PC-9 (cell line): ENCODE measurements at regions of chr7 and their contacts with region 1.

Region 1: GRCh38 chr7:134316539-134317344 is at the start of gene SLC35B4:
- DNase-seq: peak; percentile 96
- H3K4me3 ChIP-seq: peak within 1 kb of the TSS; percentile 78
- H3K27ac ChIP-seq: no peak within 1 kb of the TSS
- H3K4me1 ChIP-seq: peaks cover 14% of the 10 kb centered on the region
- H3K27me3 ChIP-seq: no peaks in the 10 kb centered on the region
- CTCF ChIP-seq: no peak; the same call in 1 of the 2 replicates
- total RNA-seq, gene SLC35B4: 16.7 and 17.9 TPM in 2 replicates

Region 2: GRCh38 chr7:133081599-133082389 is 1234.9 kb before region 1 on chr7 and contains the start of gene CHCHD3:
- CTCF ChIA-PET with region 1: no interaction called
- POLR2A ChIA-PET with region 1: no interaction called
- intact Hi-C with region 1: loop called (anchors 2 kb)
- DNase-seq: peak; percentile 98
- H3K4me3 ChIP-seq: peak within 1 kb of the TSS; percentile 88
- H3K27ac ChIP-seq: 0 out of 2 replicates have a peak within 1 kb of the TSS, but pooled peaks have one; percentile 10
- H3K4me1 ChIP-seq: peaks cover 9% of the 10 kb centered on the region; the same call in 1 of the 2 replicates
- H3K27me3 ChIP-seq: peaks cover 14% of the 10 kb centered on the region; the same call in 1 of the 2 replicates
- CTCF ChIP-seq: no peak
- total RNA-seq, gene CHCHD3: 77.7 and 100 TPM in 2 replicates

Region 3: GRCh38 chr7:133252858-133253518 is 1063.8 kb before region 1 on chr7 and contains the start of gene EXOC4:
- CTCF ChIA-PET with region 1: no interaction called
- POLR2A ChIA-PET with region 1: no interaction called
- intact Hi-C with region 1: loop called (anchors 2 kb)
- DNase-seq: peak; percentile 94 to 96
- H3K4me3 ChIP-seq: peak within 1 kb of the TSS; percentile 86
- H3K27ac ChIP-seq: peak within 1 kb of the TSS; percentile 27
- H3K4me1 ChIP-seq: peaks cover 12% of the 10 kb centered on the region
- H3K27me3 ChIP-seq: no peaks in the 10 kb centered on the region
- CTCF ChIP-seq: no peak
- total RNA-seq, gene EXOC4: 88.5 and 101 TPM in 2 replicates

Region 4: GRCh38 chr7:134140889-134141867 is 175.6 kb before region 1 on chr7:
- CTCF ChIA-PET with region 1: no interaction called
- POLR2A ChIA-PET with region 1: no interaction called
- intact Hi-C with region 1: loop called (anchors 10 kb)
- DNase-seq: peak; percentile 45 to 63
- H3K4me3 ChIP-seq: no peak overlapping the region
- H3K27ac ChIP-seq: no peak overlapping the region
- H3K4me1 ChIP-seq: no peaks in the 10 kb centered on the region
- H3K27me3 ChIP-seq: no peaks in the 10 kb centered on the region
- CTCF ChIP-seq: peak; percentile 94

Region 5: GRCh38 chr7:134368851-134369552 is 52.3 kb after region 1 on chr7:
- CTCF ChIA-PET with region 1: no interaction called
- POLR2A ChIA-PET with region 1: no interaction called
- intact Hi-C with region 1: loop called (anchors 2 kb)
- DNase-seq: peak in 1 of 2 experiments; percentile 80
- H3K4me3 ChIP-seq: no peak overlapping the region
- H3K27ac ChIP-seq: peak overlapping the region; percentile 57
- H3K4me1 ChIP-seq: peaks cover 55% of the 10 kb centered on the region
- H3K27me3 ChIP-seq: no peaks in the 10 kb centered on the region
- CTCF ChIP-seq: no peak